ENCODE measurements at regions of chr3 and their contacts with region 1.

Region 1: GRCh38 chr3:58177747-58178527 is 32.8 kb downstream of the DNASE1L3 start:
- DNase-seq: peak; percentile 78
- H3K4me3 Mint-ChIP-seq: peak overlapping the region; percentile 51
- H3K27ac Mint-ChIP-seq: no peak overlapping the region
- H3K4me1 Mint-ChIP-seq: peaks cover 24% of the 10 kb centered on the region
- H3K27me3 Mint-ChIP-seq: no peaks in the 10 kb centered on the region
- CTCF ChIP-seq: peak; percentile 82

Region 2: DNA sequence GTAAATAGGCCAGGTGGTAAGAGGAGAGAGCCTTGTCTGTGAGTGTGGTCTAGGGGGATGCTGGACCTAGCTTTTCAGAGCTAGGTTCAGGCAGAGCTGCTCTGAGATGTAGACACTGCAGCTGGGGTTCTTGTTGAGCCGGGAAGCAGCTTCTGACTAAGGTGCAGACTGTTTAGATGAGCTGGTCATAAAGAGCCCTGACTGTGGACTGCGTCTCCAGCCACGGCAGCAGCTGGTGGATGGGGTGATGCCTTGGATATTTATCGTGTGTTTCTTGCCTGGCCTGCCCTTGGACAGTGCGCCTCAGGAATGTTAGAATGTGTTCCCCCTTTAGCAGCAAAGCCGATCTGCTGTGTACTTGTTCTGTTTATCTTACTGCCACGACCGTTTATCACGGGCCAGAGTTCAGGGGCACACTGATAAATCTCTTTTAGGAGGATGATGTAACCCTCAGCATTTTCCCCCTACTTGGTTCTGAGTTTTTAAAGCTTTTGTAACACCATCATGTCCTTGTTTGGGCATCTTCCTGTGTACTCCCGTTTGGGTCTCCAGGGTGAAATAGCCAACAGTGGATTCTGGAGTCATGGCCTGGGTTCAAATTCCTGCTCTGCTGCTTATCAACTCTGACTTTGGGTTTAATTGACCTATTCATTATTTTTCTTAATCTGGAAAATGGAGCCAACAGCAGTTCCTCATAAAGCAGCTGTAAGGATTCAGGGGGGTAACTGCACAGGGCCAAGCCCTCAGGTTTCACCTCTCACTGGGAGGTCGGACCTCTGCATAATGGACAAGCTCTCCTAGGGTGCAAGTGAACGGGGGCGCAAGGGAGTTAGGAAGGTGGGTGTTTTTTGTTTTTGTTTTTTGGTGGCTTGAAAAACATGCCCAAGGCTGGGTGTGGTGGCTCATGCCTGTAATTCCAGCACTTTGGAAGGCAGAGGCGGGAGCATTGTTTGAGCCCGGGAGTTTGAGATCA is 118.3 kb before region 1 on chr3:
- CTCF ChIA-PET with region 1: no interaction called
- POLR2A ChIA-PET with region 1: no interaction called
- intact Hi-C with region 1: no loop called
- DNase-seq: no peak
- H3K4me3 Mint-ChIP-seq: no peak overlapping the region
- H3K27ac Mint-ChIP-seq: peak overlapping the region; percentile 24
- H3K4me1 Mint-ChIP-seq: peaks cover 45% of the 10 kb centered on the region
- H3K27me3 Mint-ChIP-seq: no peaks in the 10 kb centered on the region
- CTCF ChIP-seq: no peak

Region 3: GRCh38 chr3:58157700-58158099 is 20.2 kb before region 1 on chr3:
- CTCF ChIA-PET with region 1: interaction called, 15 read pairs
- POLR2A ChIA-PET with region 1: interaction called, 4 read pairs
- intact Hi-C with region 1: no loop called
- DNase-seq: no peak
- H3K4me3 Mint-ChIP-seq: no peak overlapping the region
- H3K27ac Mint-ChIP-seq: peak overlapping the region; percentile 46
- H3K4me1 Mint-ChIP-seq: peaks cover 23% of the 10 kb centered on the region
- H3K27me3 Mint-ChIP-seq: no peaks in the 10 kb centered on the region
- CTCF ChIP-seq: no peak

Region 4: DNA sequence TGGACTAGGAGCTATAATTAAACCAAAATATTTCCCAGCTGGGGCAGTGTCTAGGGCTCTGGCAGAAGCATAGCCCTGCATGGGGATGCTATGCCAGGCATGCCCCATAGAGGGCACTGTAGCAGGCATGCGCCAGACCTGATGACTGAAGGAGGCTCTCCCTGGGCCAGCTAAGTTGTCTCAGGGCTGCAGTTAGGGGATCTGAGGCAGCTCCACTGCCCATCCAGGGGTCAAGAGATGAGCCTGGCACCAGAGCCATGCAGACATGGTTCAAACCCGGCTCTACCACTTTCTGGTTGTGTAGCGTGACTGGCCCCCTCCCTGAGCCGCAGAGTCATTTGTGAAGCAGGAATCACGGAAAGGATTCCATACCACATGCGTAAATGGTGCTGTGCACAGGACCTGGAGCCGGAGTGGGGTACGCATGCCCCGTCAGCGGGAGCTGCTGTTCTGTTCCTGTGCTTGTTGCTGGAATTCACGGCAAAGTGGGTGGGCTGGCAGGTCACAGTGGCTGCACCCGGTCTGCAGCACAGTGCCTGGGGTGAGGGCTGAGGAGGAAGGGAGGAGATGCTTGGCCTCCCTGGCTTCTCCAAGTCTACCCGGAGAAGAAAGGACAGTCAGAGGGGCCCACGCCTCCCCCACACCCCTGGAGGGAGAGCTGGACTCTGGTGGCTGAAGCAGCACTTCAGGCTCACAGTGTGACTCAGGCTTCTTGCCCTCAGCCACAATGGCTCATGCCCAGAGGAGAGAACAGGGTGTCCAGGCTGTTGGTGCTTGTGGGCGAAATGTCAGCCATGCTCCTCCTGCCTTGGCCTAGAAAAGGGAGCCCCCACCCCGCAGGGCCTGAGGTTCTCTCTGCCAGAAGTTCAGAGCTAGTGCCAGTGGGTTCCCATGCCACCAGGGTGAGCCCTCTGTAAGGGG is 10.2 kb before region 1 on chr3:
- CTCF ChIA-PET with region 1: interaction called, 80 read pairs
- POLR2A ChIA-PET with region 1: interaction called, 8 read pairs
- intact Hi-C with region 1: no loop called
- DNase-seq: peak; percentile 54
- H3K4me3 Mint-ChIP-seq: no peak overlapping the region
- H3K27ac Mint-ChIP-seq: no peak overlapping the region
- H3K4me1 Mint-ChIP-seq: peaks cover 4% of the 10 kb centered on the region
- H3K27me3 Mint-ChIP-seq: no peaks in the 10 kb centered on the region
- CTCF ChIP-seq: peak; percentile 67

Region 5: GRCh38 chr3:58188173-58188564 is 10.2 kb after region 1 on chr3:
- CTCF ChIA-PET with region 1: interaction called, 29 read pairs
- POLR2A ChIA-PET with region 1: no interaction called
- intact Hi-C with region 1: no loop called
- DNase-seq: peak; percentile 86
- H3K4me3 Mint-ChIP-seq: no peak overlapping the region
- H3K27ac Mint-ChIP-seq: no peak overlapping the region
- H3K4me1 Mint-ChIP-seq: peaks cover 9% of the 10 kb centered on the region
- H3K27me3 Mint-ChIP-seq: no peaks in the 10 kb centered on the region
- CTCF ChIP-seq: no peak

Region 6: DNA sequence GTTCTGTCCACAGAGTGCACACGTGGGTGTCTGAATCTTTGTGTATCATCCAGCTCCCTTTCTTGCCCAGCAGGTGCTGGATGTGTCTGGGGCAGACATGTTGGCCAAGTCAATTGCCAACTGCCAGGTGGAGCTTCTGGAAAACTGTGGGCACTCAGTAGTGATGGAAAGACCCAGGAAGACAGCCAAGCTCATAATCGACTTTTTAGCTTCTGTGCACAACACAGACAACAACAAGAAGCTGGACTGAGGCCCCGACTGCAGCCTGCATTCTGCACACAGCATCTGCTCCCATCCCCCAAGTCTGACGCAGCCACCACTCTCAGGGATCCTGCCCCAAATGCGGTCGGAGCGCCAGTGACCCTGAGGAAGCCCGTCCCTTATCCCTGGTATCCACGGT is 115.6 kb after region 1 on chr3:
- CTCF ChIA-PET with region 1: interaction called, 254 read pairs
- POLR2A ChIA-PET with region 1: no interaction called
- intact Hi-C with region 1: no loop called
- DNase-seq: no peak
- H3K4me3 Mint-ChIP-seq: no peak overlapping the region
- H3K27ac Mint-ChIP-seq: no peak overlapping the region
- H3K4me1 Mint-ChIP-seq: no peaks in the 10 kb centered on the region
- H3K27me3 Mint-ChIP-seq: no peaks in the 10 kb centered on the region
- CTCF ChIP-seq: no peak

Region 7: GRCh38 chr3:58299839-58300516 is 122.0 kb after region 1 on chr3:
- CTCF ChIA-PET with region 1: interaction called, 254 read pairs
- POLR2A ChIA-PET with region 1: no interaction called
- intact Hi-C with region 1: no loop called
- DNase-seq: peak; percentile 38
- H3K4me3 Mint-ChIP-seq: no peak overlapping the region
- H3K27ac Mint-ChIP-seq: no peak overlapping the region
- H3K4me1 Mint-ChIP-seq: no peaks in the 10 kb centered on the region
- H3K27me3 Mint-ChIP-seq: peaks cover 11% of the 10 kb centered on the region
- CTCF ChIP-seq: peak; percentile 54